CD8-positive, alpha-beta T cell (primary cell): ENCODE measurements at regions of chr22 and their contacts with region 1.

Region 1: GRCh38 chr22:46035742-46036557 is 59.0 kb upstream of the WNT7B start:
- DNase-seq: peak; percentile 99 to 100 (median 100)
- ATAC-seq: peak; percentile 88
- H3K4me3 ChIP-seq: peak overlapping the region; percentile 73 to 94
- H3K4me3 Mint-ChIP-seq: peak overlapping the region; percentile 84
- H3K27ac ChIP-seq: peak overlapping the region; percentile 98 to 100
- H3K27ac Mint-ChIP-seq: peak overlapping the region; percentile 97
- H3K4me1 ChIP-seq: peaks cover 18% of the 10 kb centered on the region
- H3K4me1 Mint-ChIP-seq: peaks cover 16% of the 10 kb centered on the region
- H3K27me3 ChIP-seq: no peaks in the 10 kb centered on the region
- H3K27me3 Mint-ChIP-seq: no peaks in the 10 kb centered on the region
- CTCF ChIP-seq: no peak

Region 2: GRCh38 chr22:45163451-45164269 is 872.3 kb before region 1 on chr22 and contains the start of gene NUP50:
- CTCF ChIA-PET with region 1: no interaction called
- POLR2A ChIA-PET with region 1: no interaction called
- intact Hi-C with region 1: loop called in 1 of 2 experiments (anchors 1 kb)
- DNase-seq: peak; percentile 92 to 99 (median 96)
- ATAC-seq: peak; percentile 83
- H3K4me3 ChIP-seq: peak within 1 kb of the TSS; percentile 86 to 90
- H3K4me3 Mint-ChIP-seq: peak within 1 kb of the TSS; percentile 92
- H3K27ac ChIP-seq: peak within 1 kb of the TSS; percentile 86 to 88
- H3K27ac Mint-ChIP-seq: peak within 1 kb of the TSS; percentile 93
- H3K4me1 ChIP-seq: peaks cover 38% of the 10 kb centered on the region
- H3K4me1 Mint-ChIP-seq: peaks cover 65% of the 10 kb centered on the region
- H3K27me3 ChIP-seq: no peaks in the 10 kb centered on the region
- H3K27me3 Mint-ChIP-seq: no peaks in the 10 kb centered on the region
- CTCF ChIP-seq: no peak
- total RNA-seq, gene NUP50: 133 to 134 TPM

Region 3: DNA sequence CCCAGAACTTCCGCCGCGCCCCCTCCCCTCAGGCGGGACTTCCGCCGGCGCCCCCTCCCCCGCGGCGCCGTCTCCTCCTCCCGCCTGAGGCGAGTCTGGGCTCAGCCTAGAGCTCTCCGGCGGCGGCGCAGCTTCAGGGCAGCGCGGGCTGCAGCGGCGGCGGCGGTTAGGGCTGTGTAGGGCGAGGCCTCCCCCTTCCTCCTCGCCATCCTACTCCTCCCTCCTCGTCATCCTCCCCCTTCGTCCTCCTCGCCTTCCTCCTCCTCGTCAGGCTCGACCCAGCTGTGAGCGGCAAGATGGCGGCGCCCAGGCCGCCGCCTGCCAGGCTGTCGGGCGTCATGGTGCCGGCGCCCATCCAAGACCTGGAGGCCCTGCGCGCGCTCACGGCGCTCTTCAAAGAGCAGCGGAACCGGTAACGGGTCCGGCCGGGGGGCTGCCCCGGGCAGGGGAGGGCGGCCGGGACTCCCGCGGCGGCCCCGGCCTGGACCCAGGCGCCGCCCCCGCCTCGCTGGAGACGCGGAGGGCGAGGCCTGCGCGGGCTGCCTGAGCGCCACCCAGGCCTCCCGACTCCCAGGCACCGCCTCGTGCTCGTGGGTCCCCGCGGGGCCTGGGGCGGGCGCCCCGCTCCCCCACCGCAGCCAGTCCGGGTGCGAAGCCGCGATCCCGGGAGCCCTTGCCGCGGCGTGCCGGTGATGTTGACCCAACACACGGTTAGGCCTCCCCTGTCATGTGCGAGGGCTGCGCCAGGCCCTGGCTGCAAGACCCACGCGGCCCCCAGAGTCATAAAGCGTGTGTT is 364.0 kb before region 1 on chr22 and contains the start of gene ATXN10:
- CTCF ChIA-PET with region 1: no interaction called
- POLR2A ChIA-PET with region 1: no interaction called
- intact Hi-C with region 1: loop called in 1 of 2 experiments (anchors 5 kb)
- DNase-seq: peak; percentile 33 to 81 (median 60)
- ATAC-seq: peak; percentile 76
- H3K4me3 ChIP-seq: peak within 1 kb of the TSS; percentile 58 to 64
- H3K4me3 Mint-ChIP-seq: peak within 1 kb of the TSS; percentile 90
- H3K27ac ChIP-seq: peak within 1 kb of the TSS; percentile 52 to 60
- H3K27ac Mint-ChIP-seq: peak within 1 kb of the TSS; percentile 92
- H3K4me1 ChIP-seq: peaks cover 27% of the 10 kb centered on the region
- H3K4me1 Mint-ChIP-seq: peaks cover 44% of the 10 kb centered on the region
- H3K27me3 ChIP-seq: no peaks in the 10 kb centered on the region
- H3K27me3 Mint-ChIP-seq: peaks cover 3% of the 10 kb centered on the region
- CTCF ChIP-seq: no peak
- total RNA-seq, gene ATXN10: 35.4 to 37.7 TPM

Region 4: GRCh38 chr22:45896261-45896951 is 139.5 kb before region 1 on chr22:
- CTCF ChIA-PET with region 1: no interaction called
- POLR2A ChIA-PET with region 1: no interaction called
- intact Hi-C with region 1: no loop called
- DNase-seq: no peak
- ATAC-seq: no peak
- H3K4me3 ChIP-seq: no peak overlapping the region
- H3K4me3 Mint-ChIP-seq: no peak overlapping the region
- H3K27ac ChIP-seq: no peak overlapping the region
- H3K27ac Mint-ChIP-seq: no peak overlapping the region
- H3K4me1 ChIP-seq: no peaks in the 10 kb centered on the region
- H3K4me1 Mint-ChIP-seq: no peaks in the 10 kb centered on the region
- H3K27me3 ChIP-seq: peaks cover 0 to 2% of the 10 kb centered on the region in 2 experiments
- H3K27me3 Mint-ChIP-seq: peaks cover 6% of the 10 kb centered on the region
- CTCF ChIP-seq: no peak

Region 5: DNA sequence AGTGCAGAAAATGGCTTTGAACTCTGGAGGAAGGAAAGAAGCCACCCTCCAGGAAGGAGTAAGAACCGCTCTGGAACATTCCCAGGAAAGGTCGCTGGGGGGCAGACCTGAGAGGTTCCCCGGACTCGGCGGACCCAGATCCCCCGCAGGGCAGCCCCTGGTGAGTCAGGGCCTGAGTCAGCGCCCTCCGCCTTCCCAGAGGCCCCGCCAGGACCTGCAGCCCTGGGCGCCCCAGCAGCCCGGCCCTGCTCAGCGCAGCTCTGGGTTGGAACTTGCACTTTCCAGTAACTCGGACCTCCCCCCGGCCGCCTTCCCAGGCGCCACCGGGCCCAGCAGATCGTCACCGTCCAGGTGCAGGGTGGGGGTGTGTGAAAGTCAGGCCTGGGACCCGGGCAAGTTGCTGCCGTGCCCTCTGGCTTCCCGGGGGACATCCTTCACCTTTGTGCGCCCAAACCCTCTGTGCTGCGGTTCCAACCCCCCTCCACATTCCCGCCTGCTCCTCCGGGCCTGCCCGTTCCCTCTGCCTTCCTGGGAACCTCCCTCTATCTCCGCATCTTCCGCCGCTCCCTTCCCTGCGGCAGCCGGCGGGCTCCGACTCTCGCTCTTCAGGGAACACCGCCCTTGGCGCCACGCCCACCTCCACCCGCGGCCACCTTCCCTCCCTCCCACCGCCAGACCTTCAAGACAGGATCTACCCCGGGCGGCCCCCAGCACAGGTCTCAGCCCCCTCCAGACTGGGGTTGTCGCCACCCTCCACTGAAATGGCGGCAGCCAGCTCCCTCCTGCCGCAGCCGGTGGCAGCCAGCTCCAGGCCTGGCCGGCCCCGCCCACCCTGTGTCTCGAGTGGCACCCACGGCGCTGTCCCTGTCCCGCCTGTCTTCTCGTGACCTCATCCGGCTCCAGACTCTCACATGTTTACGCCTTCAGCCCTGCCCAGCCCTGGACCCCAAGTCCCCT is 22.2 kb before region 1 on chr22:
- CTCF ChIA-PET with region 1: interaction called, 33 read pairs
- POLR2A ChIA-PET with region 1: interaction called, 39 read pairs
- intact Hi-C with region 1: loop called (anchors 1 kb)
- DNase-seq: peak; percentile 58 to 90 (median 86)
- ATAC-seq: peak; percentile 90
- H3K4me3 ChIP-seq: peak overlapping the region; percentile 79 to 86
- H3K4me3 Mint-ChIP-seq: peak overlapping the region; percentile 89
- H3K27ac ChIP-seq: peak overlapping the region; percentile 86 to 89
- H3K27ac Mint-ChIP-seq: peak overlapping the region; percentile 90
- H3K4me1 ChIP-seq: peaks cover 5% of the 10 kb centered on the region
- H3K4me1 Mint-ChIP-seq: peaks cover 5% of the 10 kb centered on the region
- H3K27me3 ChIP-seq: no peaks in the 10 kb centered on the region
- H3K27me3 Mint-ChIP-seq: no peaks in the 10 kb centered on the region
- CTCF ChIP-seq: peak; percentile 62

Region 6: DNA sequence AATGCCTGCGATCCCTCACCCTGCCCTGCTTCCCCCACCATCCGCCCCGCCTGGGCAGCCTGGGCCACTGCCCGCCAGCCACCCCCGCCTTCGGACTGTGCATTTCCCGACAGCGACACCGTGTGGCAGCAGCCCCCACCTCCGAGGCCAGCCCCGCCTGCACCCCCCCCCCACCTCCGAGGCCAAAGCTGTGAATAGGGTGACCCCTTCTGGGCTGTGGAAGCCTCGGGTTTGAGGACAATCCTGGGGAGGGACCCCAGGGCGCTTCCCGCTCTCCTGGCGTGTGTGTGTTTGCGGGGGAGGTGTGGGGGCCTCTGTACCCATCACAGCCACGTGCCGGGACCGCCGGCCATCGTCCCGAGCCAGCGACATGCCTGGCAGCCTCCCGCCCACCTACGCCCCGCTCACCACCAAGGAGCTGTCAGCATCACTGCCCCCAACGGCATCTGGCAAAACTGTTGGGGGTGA is 80.6 kb after region 1 on chr22:
- CTCF ChIA-PET with region 1: interaction called, 9 read pairs
- POLR2A ChIA-PET with region 1: interaction called, 5 read pairs
- intact Hi-C with region 1: loop called in 1 of 2 experiments (anchors 1 kb)
- DNase-seq: peak; percentile 70 to 90 (median 88)
- ATAC-seq: peak; percentile 97
- H3K4me3 ChIP-seq: no peak overlapping the region
- H3K4me3 Mint-ChIP-seq: no peak overlapping the region
- H3K27ac ChIP-seq: no peak overlapping the region
- H3K27ac Mint-ChIP-seq: no peak overlapping the region
- H3K4me1 ChIP-seq: peaks cover 5% of the 10 kb centered on the region
- H3K4me1 Mint-ChIP-seq: no peaks in the 10 kb centered on the region
- H3K27me3 ChIP-seq: no peaks in the 10 kb centered on the region
- H3K27me3 Mint-ChIP-seq: no peaks in the 10 kb centered on the region
- CTCF ChIP-seq: peak; percentile 70

Region 7: GRCh38 chr22:46296257-46297150 is 260.6 kb after region 1 on chr22 and contains the start of gene GTSE1:
- CTCF ChIA-PET with region 1: no interaction called
- POLR2A ChIA-PET with region 1: interaction called, 6 read pairs
- intact Hi-C with region 1: loop called in 1 of 2 experiments (anchors 1 kb)
- DNase-seq: peak; percentile 94 to 100 (median 97)
- ATAC-seq: peak; percentile 97
- H3K4me3 ChIP-seq: peak within 1 kb of the TSS; percentile 61 to 63
- H3K4me3 Mint-ChIP-seq: peak within 1 kb of the TSS; percentile 89
- H3K27ac ChIP-seq: peak within 1 kb of the TSS; percentile 74 to 94
- H3K27ac Mint-ChIP-seq: peak within 1 kb of the TSS; percentile 98
- H3K4me1 ChIP-seq: peaks cover 24% of the 10 kb centered on the region
- H3K4me1 Mint-ChIP-seq: peaks cover 21% of the 10 kb centered on the region
- H3K27me3 ChIP-seq: no peaks in the 10 kb centered on the region
- H3K27me3 Mint-ChIP-seq: peaks cover 14% of the 10 kb centered on the region
- CTCF ChIP-seq: peak; percentile 29
- total RNA-seq, gene GTSE1: 0.19 to 0.30 TPM

Region 8: DNA sequence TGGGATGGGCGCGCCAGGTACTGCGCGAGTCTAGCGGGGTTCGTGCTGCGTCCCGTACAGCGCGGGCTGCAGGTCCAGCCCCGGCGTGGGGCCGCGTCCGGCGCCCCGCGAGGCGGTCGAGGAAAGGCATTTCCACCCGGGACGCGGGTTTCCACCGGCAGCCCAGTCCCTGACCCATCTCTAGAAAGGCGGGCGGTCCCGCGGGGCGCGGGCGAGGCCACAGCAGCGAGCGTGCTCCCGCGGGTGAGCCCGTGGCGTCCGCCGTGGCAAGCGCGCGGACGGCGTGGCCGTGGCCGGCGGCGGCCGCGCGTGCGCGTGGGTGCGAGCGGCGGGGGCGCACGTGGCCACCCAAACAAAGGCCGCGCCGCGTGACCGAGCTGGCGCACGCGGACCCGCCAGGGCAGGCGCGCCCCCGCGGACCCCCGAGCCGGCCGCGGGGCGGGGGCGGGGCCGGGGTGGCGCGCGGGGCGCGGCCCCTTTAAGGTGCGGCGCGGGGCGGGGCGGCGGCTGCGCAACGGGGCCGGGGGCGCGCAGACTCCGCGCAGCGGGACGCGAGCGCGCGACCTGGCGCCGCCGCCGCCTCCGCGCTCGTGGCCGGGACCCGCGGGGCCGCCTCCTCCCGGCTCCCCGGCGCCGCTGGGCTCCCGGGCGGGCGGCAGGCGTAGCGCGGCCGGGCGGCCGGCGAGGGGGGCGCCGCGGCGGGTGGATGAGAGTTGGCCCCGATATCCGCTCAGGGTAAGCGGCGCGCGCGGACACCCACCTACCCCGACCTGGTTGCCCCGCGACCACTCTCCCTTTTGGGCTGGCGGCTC is 540.8 kb after region 1 on chr22:
- CTCF ChIA-PET with region 1: no interaction called
- POLR2A ChIA-PET with region 1: no interaction called
- intact Hi-C with region 1: no loop called
- DNase-seq: peak; percentile 24 to 88 (median 57)
- ATAC-seq: peak; percentile 79
- H3K4me3 ChIP-seq: peak overlapping the region; percentile 40 to 58
- H3K4me3 Mint-ChIP-seq: peak overlapping the region; percentile 85
- H3K27ac ChIP-seq: no peak overlapping the region
- H3K27ac Mint-ChIP-seq: peak overlapping the region; percentile 74
- H3K4me1 ChIP-seq: peaks cover 21% of the 10 kb centered on the region
- H3K4me1 Mint-ChIP-seq: peaks cover 39% of the 10 kb centered on the region
- H3K27me3 ChIP-seq: no peaks in the 10 kb centered on the region
- H3K27me3 Mint-ChIP-seq: no peaks in the 10 kb centered on the region
- CTCF ChIP-seq: no peak